ENCODE measurements at regions of chr3 and their contacts with region 1.

Region 1: DNA sequence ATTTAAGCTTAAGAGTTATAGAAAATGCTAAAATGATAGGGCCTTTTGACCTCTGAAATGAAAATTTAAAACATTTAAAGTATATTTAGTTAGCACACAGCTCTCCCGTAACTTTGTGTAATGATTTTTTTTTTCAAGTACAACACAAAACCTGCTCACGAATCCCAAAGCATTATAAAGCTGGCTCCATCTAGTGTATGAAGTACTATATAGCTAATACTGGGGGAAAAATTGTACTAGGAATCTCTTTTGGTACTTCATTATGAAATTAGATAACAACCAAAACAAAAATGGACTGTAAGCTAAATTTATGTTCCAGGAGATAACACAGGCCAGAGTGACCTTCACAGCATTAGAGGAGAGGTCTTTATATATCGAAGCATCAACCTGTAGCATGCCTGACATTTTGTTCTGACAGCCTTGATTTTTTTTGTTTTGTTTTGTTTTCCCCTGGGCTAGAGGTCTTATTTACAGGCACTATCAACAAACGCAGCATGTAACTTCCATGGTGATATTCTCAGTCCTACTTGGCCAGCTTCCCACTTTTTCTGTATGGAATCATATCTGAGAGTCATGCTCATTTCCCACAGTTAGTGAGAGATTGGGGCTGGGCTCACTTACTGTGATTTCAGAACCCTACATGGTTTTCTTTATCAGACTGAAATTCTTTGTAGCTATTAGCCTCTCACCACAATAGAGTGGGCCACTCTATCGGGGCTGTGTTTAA is 116.3 kb downstream of the MITF start:
- DNase-seq: peak; percentile 31
- ATAC-seq: peak; percentile 43
- H3K4me3 ChIP-seq: no peak overlapping the region
- H3K27ac ChIP-seq: no peak overlapping the region; the same call in 1 of the 2 replicates
- H3K4me1 ChIP-seq: peaks cover 21% of the 10 kb centered on the region
- H3K27me3 ChIP-seq: no peaks in the 10 kb centered on the region
- CTCF ChIP-seq: peak; percentile 56

Region 2: GRCh38 chr3:69691860-69692259 is 163.7 kb before region 1 on chr3:
- CTCF ChIA-PET with region 1: interaction called, 4 read pairs
- POLR2A ChIA-PET with region 1: no interaction called
- intact Hi-C with region 1: loop called (anchors 1 kb)
- DNase-seq: no peak
- ATAC-seq: no peak
- H3K4me3 ChIP-seq: no peak overlapping the region
- H3K27ac ChIP-seq: no peak overlapping the region
- H3K4me1 ChIP-seq: peaks cover 11% of the 10 kb centered on the region
- H3K27me3 ChIP-seq: no peaks in the 10 kb centered on the region
- CTCF ChIP-seq: no peak

Region 3: GRCh38 chr3:69791919-69792399 is 63.6 kb before region 1 on chr3:
- CTCF ChIA-PET with region 1: interaction called, 3 read pairs
- POLR2A ChIA-PET with region 1: no interaction called
- intact Hi-C with region 1: loop called (anchors 1 kb)
- DNase-seq: peak; percentile 39
- ATAC-seq: peak; percentile 64
- H3K4me3 ChIP-seq: no peak overlapping the region
- H3K27ac ChIP-seq: no peak overlapping the region
- H3K4me1 ChIP-seq: peaks cover 9% of the 10 kb centered on the region
- H3K27me3 ChIP-seq: no peaks in the 10 kb centered on the region
- CTCF ChIP-seq: peak; percentile 54

Region 4: DNA sequence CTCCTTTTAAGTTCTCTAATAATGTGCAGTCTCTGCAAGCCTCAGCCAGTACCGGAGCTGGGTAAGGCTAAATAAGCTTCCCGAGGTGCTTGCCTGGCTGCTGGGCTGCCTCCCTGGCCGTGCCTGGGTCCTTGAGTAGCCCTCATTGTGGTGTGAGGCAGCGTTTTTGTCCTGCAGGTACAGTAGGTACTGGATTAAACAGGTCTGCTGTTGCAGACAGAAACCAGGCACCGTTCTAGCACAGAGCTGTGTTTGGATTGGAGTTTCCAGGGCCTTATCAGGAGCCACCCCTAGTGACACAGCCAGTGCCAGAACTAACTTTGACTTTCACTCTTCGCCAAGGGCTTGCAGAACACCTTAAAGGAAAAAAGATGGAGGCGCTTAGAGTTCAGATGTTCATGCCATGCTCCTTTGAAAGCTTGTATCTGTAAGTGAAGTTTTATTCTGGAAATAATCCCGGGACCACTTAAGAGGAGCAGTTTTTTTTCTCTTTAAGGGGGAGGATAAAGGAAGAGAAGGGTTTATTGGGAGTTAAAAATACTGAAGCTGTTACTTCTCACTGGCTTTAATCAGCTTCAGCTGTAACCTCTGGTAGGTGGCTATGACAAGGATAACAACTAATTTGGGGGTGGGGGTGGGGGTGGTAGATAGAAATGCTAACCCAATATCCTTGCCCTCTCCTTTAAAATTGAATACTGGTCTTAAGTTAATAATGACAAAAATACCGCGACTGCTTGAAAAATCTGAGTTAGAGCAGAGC is 10.5 kb after region 1 on chr3:
- CTCF ChIA-PET with region 1: interaction called, 12 read pairs
- POLR2A ChIA-PET with region 1: interaction called, 4 read pairs
- intact Hi-C with region 1: no loop called
- DNase-seq: no peak
- ATAC-seq: no peak
- H3K4me3 ChIP-seq: no peak overlapping the region
- H3K27ac ChIP-seq: peak overlapping the region; percentile 77
- H3K4me1 ChIP-seq: peaks cover 54% of the 10 kb centered on the region
- H3K27me3 ChIP-seq: no peaks in the 10 kb centered on the region
- CTCF ChIP-seq: no peak